ENCODE measurements at regions of chr17 and their contacts with region 1.

Region 1: DNA sequence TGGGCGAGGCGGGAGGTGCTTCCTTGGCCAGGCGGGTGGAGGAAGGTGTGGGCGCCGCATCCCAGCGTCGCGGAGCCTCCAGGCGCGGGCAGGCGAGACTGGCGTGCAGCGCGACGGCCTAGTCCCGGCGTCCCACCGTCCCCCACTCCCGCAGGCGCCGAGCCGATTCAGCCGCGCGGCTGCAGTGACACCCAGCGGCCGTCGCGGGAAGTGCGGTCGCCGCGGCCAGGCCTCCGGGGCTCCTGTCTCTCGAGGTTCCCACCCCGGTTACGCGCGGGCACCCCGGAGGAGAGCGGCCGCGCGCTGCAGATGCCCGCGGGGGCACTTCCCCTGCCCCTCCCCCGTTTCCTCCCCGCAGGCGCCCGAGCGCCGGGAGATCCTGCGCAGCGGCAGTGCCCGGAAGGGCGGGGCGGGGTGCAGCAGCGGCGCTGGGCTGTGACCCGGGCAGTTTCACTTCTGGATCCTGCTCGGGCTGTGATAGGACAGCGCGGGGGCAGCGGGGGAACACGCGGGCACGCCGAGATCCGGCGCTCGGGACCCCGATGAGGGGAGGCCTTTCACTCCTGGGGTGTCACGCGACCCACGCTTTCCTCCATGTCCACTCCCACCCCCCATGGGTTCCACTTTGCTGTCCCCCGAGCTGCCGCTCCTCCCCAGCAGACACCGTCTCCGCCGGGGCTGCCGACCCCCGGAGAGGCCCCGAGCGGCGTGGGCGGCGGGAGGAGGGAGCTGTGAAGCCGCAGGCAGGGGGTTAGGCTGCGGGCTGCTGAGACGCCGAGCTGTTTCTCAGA is 16.6 kb downstream of the GRB7 start:
- DNase-seq: peak; percentile 95 to 99 (median 97)
- ATAC-seq: peak; percentile 74
- H3K4me3 ChIP-seq: peak overlapping the region; percentile 64 to 75
- H3K4me3 Mint-ChIP-seq: peak overlapping the region; percentile 78
- H3K27ac ChIP-seq: peak overlapping the region; percentile 93 to 97
- H3K27ac Mint-ChIP-seq: peak overlapping the region; percentile 98
- H3K4me1 ChIP-seq: peaks cover 56% of the 10 kb centered on the region
- H3K4me1 Mint-ChIP-seq: peaks cover 59% of the 10 kb centered on the region
- H3K27me3 ChIP-seq: no peaks in the 10 kb centered on the region
- H3K27me3 Mint-ChIP-seq: no peaks in the 10 kb centered on the region
- CTCF ChIP-seq: peak; percentile 91

Region 2: GRCh38 chr17:39636927-39637736 is 117.2 kb before region 1 on chr17 and contains the start of gene STARD3:
- CTCF ChIA-PET with region 1: interaction called, 4 read pairs
- POLR2A ChIA-PET with region 1: no interaction called
- intact Hi-C with region 1: loop called (anchors 1 kb)
- DNase-seq: peak; percentile 78 to 95 (median 92)
- ATAC-seq: peak; percentile 85
- H3K4me3 ChIP-seq: peak within 1 kb of the TSS; percentile 85 to 97
- H3K4me3 Mint-ChIP-seq: peak within 1 kb of the TSS; percentile 93
- H3K27ac ChIP-seq: peak within 1 kb of the TSS; percentile 86 to 94
- H3K27ac Mint-ChIP-seq: peak within 1 kb of the TSS; percentile 97
- H3K4me1 ChIP-seq: peaks cover 47% of the 10 kb centered on the region
- H3K4me1 Mint-ChIP-seq: peaks cover 64% of the 10 kb centered on the region
- H3K27me3 ChIP-seq: no peaks in the 10 kb centered on the region
- H3K27me3 Mint-ChIP-seq: no peaks in the 10 kb centered on the region
- CTCF ChIP-seq: no peak
- total RNA-seq, gene STARD3: 102 to 118 TPM

Region 3: DNA sequence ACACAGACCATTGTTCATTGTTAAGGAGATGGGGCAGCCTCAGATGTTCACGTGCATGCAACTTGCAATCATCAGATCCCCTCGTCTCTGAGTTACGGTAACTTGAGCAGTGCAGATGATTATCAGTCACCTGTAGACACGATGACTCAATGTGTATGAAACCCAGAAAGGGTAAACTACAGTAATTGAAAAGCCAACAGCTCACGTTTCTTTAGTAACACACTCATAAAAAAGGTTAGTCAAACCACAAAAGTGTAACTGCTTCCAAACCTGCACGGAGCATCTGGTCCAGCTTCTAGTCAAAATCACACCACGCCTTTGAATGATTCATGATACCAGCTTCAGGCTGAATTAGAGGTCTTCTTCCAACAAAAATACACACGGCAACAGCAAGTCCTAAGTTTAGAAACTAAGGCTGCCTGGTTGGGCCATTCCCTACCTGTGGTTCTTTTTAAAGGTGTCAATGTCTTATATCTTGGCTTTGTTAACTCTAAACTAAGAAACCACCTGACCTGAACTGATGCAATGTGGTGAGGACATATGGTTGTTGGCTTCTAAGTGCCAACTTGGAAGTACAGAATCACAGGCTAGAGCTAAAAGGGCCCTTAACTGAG is 15.7 kb after region 1 on chr17:
- CTCF ChIA-PET with region 1: interaction called, 16 read pairs
- POLR2A ChIA-PET with region 1: interaction called, 39 read pairs
- intact Hi-C with region 1: loop called (anchors 1 kb)
- DNase-seq: peak in 8 of 9 experiments; percentile 38 to 90 (median 66)
- ATAC-seq: peak; percentile 78
- H3K4me3 ChIP-seq: peak overlapping the region in 1 of 2 experiments; percentile 1
- H3K4me3 Mint-ChIP-seq: peak overlapping the region; percentile 66
- H3K27ac ChIP-seq: peak overlapping the region; percentile 46 to 82
- H3K27ac Mint-ChIP-seq: peak overlapping the region; percentile 97
- H3K4me1 ChIP-seq: peaks cover 99% of the 10 kb centered on the region
- H3K4me1 Mint-ChIP-seq: peaks cover 96% of the 10 kb centered on the region
- H3K27me3 ChIP-seq: no peaks in the 10 kb centered on the region
- H3K27me3 Mint-ChIP-seq: no peaks in the 10 kb centered on the region
- CTCF ChIP-seq: no peak

Region 4: GRCh38 chr17:39813631-39814030 is 59.3 kb after region 1 on chr17:
- CTCF ChIA-PET with region 1: interaction called, 5 read pairs
- POLR2A ChIA-PET with region 1: interaction called, 26 read pairs
- intact Hi-C with region 1: loop called (anchors 2 kb)
- DNase-seq: peak; percentile 27 to 96 (median 69)
- ATAC-seq: peak; percentile 94
- H3K4me3 ChIP-seq: peak overlapping the region; percentile 18 to 41
- H3K4me3 Mint-ChIP-seq: peak overlapping the region; percentile 75
- H3K27ac ChIP-seq: peak overlapping the region; percentile 62 to 75
- H3K27ac Mint-ChIP-seq: peak overlapping the region; percentile 94
- H3K4me1 ChIP-seq: peaks cover 62% of the 10 kb centered on the region
- H3K4me1 Mint-ChIP-seq: peaks cover 74% of the 10 kb centered on the region
- H3K27me3 ChIP-seq: no peaks in the 10 kb centered on the region
- H3K27me3 Mint-ChIP-seq: no peaks in the 10 kb centered on the region
- CTCF ChIP-seq: no peak

Region 5: DNA sequence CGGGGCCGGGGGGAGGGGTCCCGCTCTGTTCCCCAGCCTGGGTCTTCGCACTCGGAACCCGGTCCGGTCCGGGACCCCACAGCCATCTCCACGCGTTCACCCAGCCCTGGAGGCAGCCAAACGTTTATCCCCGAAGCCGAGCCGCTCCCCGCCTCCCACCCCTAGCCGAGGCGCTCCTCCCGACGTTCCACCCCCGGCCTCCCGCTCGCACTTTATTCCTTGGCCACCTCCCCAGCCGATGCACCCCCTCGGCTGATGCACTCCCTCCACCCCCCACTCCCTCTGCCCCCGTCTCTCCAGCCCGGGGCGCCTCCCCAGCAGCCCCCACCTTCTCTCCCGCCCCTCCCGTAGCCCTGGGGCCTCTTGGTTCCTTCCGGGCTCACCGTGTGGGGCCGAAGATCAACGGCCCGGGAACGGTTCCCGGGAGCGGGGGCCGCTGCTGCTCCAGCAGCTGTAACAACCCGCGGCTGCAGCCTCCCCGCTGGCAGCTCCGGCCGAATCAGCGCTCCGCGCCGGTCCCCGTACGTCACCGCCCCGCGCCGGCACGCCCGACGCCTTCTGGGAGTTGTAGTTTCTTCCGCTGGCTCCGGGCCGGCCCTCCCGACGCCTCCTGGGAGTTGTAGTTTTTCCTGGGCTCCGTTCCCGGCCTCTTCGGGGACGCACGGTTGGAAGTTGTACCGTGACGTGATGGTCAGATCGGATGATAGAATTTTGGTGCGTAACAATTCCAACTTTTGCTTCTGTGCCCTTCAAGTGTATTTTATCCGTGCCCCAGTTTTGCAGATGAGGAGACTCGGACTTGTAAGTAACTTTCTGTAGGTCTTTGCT is 173.0 kb after region 1 on chr17 and contains the starts of genes LRRC3C and ORMDL3:
- CTCF ChIA-PET with region 1: interaction called, 8 read pairs
- POLR2A ChIA-PET with region 1: interaction called, 15 read pairs
- intact Hi-C with region 1: loop called (anchors 1 kb)
- DNase-seq: peak; percentile 80 to 96 (median 91)
- ATAC-seq: peak; percentile 70
- H3K4me3 ChIP-seq: peak within 1 kb of the TSS; percentile 87 to 90
- H3K4me3 Mint-ChIP-seq: peak within 1 kb of the TSS; percentile 96
- H3K27ac ChIP-seq: peak within 1 kb of the TSS; percentile 70 to 71
- H3K27ac Mint-ChIP-seq: peak within 1 kb of the TSS; percentile 91
- H3K4me1 ChIP-seq: peaks cover 50% of the 10 kb centered on the region
- H3K4me1 Mint-ChIP-seq: peaks cover 42% of the 10 kb centered on the region
- H3K27me3 ChIP-seq: no peaks in the 10 kb centered on the region
- H3K27me3 Mint-ChIP-seq: no peaks in the 10 kb centered on the region
- CTCF ChIP-seq: no peak
- total RNA-seq, gene LRRC3C: not detected
- total RNA-seq, gene ORMDL3: 136 to 140 TPM